Cardiac septum (tissue), 1 donor: ENCODE measurements at regions of chr3 and their contacts with region 1.

Region 1: DNA sequence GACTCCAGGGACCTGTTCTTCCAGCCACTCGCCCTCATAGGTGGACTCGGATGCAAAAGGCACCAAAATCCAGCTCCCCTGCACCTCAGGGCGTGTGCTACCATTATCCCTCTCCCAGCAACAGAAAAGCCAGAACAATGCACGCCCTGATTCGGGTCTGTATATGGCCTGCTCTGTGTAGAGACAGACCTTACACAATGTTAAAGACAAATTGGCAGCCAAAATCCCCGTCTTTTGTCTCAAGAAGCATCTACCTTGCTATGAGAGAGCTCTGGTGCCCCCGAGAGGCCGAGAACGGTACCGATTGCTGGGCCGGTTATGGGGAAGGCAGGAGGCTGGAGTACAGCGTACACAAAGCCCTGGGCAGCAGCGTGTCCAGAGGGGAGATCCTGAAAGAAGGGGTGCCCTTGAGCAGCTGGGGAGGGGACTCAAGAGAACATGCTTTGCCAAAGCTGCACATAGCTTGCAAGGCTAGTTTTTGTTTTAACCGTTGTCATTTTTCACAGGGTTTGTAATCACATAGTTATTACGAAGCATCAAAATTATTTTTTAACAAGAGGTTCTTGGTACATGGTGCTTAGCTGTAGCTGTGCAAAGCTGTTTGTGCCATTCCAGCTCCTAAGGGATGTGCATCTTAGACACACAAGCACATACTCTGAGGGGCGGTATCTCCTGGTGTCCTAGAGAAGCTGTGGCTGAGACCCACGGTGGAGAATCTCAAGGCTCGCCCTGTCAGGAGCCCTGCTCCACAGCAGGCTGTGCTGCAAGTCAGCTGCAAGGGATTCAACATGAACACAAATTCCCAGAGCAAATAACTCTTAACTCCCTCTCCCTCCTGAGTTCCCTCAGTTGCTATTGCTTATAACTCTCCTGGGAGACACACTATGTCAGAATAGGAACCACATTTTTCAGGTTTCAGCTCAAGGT is 461.5 kb upstream of the PPP2R3A start:
- DNase-seq: no peak

Region 2: GRCh38 chr3:135895106-135895733 is 391.2 kb after region 1 on chr3:
- intact Hi-C with region 1: loop called (anchors 10 kb)
- DNase-seq: no peak